ENCODE measurements at regions of chr20 and their contacts with region 1.

Region 1: DNA sequence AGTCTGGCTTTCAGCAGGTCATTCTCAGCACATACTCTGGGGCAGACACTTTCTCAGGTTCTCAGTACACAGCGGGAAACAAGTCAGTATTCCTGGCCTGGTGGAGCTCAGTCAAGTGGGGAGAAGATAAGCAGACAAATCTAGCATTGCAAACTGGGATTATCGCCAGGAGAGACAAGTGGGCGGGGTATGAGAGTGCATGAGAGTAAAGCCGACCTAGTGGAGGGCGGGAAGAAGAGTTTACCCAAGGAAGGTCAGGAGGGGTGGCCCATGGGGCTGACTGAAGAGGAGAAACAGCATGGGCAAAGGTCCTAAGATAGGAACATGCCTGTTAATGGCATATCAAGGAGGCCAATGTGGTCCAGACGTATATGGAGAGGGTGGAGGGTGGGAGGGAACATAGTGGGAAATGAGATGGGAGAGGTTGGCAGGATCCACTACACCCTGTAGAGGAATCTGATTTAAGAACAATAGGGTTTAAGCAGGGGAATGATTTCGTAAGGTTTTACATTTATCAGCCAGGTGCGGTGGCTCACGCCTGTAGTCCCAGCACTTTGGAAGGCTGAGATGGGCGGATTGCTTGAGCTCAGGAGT is 12.4 kb upstream of the CSNK2A1 start:
- ATAC-seq: peak in 2 of 8 experiments; percentile 29 to 81
- H3K4me3 ChIP-seq: no peak overlapping the region
- H3K27ac ChIP-seq: no peak overlapping the region
- H3K4me1 ChIP-seq: no peaks in the 10 kb centered on the region

Region 2: DNA sequence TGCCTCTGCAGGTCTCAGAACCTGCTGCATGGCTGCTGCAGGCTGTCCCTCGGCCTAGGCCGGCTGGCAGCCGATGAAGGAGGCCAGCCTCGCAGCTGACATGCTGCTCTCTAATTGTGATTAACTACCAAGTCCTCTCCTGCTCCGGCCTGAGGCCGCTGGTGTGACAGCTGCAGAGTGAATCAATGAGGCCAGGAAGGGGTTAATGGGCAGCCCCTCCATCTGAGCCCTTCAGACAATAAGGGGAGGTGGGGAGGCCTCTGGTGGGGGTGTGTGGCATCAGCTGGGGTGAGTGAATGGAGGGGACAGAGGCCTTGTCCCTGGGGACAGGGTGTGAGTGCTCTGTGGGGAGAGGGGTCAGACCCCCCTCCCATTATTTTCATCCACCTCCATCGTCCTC is 177.8 kb after region 1 on chr20:
- in situ Hi-C with region 1: loop called in 8 of 9 experiments (anchors 10 to 25 kb)
- ATAC-seq: peak in 5 of 8 experiments; percentile 85 to 90 (median 86)
- H3K4me3 ChIP-seq: no peak overlapping the region
- H3K27ac ChIP-seq: peak overlapping the region; percentile 26 to 54
- H3K4me1 ChIP-seq: peaks cover 19 to 20% of the 10 kb centered on the region in 2 donors

Region 3: DNA sequence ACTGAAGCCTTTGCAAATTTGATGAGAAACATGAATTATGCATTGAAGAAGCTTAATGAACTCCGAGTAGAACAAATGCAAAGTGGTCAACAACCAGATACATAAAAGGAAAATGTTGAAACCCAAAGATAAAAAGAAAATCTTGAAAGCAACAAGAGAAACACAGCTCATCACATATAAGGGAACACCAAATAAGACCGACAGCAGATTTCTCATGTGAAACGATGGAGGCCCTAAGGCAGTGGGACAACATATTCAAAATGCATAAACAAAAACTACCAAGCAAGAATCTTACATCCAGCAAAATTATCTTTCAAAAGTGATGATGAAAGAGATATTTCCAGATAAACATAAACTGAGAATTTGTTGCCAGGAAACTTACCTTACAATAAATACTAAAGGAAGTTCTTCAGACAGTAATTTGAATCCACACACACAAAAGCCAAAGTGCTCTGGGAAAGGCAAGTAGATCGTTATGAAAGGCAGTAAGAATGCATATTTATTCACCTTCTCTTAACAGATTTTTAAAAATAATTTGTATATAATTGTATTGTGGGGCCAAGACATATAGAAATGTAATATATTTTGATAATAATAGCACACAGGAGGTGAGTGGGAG is 189.8 kb after region 1 on chr20:
- in situ Hi-C with region 1: loop called in 6 of 9 experiments (anchors 10 to 25 kb)
- ATAC-seq: no peak
- H3K4me3 ChIP-seq: no peak overlapping the region
- H3K27ac ChIP-seq: no peak overlapping the region
- H3K4me1 ChIP-seq: no peaks in the 10 kb centered on the region